Activated naive CD4-positive, alpha-beta T cell treated with anti-CD3 and anti-CD28 coated beads for 36 hours (primary cell): ENCODE measurements at regions of chr11 and their contacts with region 1.

Region 1: GRCh38 chr11:125141686-125142535 is 22.6 kb upstream of the PKNOX2 start:
- DNase-seq: peak; percentile 46
- H3K4me3 Mint-ChIP-seq: no peak overlapping the region
- H3K27ac Mint-ChIP-seq: no peak overlapping the region
- H3K4me1 Mint-ChIP-seq: peaks cover 3% of the 10 kb centered on the region
- H3K27me3 Mint-ChIP-seq: peaks cover 15% of the 10 kb centered on the region

Region 2: GRCh38 chr11:124961972-124962609 is 179.8 kb before region 1 on chr11:
- CTCF ChIA-PET with region 1: interaction called, 31 read pairs
- intact Hi-C with region 1: loop called (anchors 1 kb)
- DNase-seq: no peak
- H3K4me3 Mint-ChIP-seq: no peak overlapping the region
- H3K27ac Mint-ChIP-seq: no peak overlapping the region
- H3K4me1 Mint-ChIP-seq: no peaks in the 10 kb centered on the region
- H3K27me3 Mint-ChIP-seq: no peaks in the 10 kb centered on the region

Region 3: GRCh38 chr11:125091247-125091876 is 50.5 kb before region 1 on chr11:
- CTCF ChIA-PET with region 1: interaction called, 25 read pairs
- intact Hi-C with region 1: loop called (anchors 1 kb)
- DNase-seq: no peak
- H3K4me3 Mint-ChIP-seq: no peak overlapping the region
- H3K27ac Mint-ChIP-seq: no peak overlapping the region
- H3K4me1 Mint-ChIP-seq: no peaks in the 10 kb centered on the region
- H3K27me3 Mint-ChIP-seq: no peaks in the 10 kb centered on the region

Region 4: GRCh38 chr11:125123947-125124617 is 17.8 kb before region 1 on chr11:
- CTCF ChIA-PET with region 1: interaction called, 24 read pairs
- intact Hi-C with region 1: no loop called
- DNase-seq: peak; percentile 61
- H3K4me3 Mint-ChIP-seq: no peak overlapping the region
- H3K27ac Mint-ChIP-seq: no peak overlapping the region
- H3K4me1 Mint-ChIP-seq: no peaks in the 10 kb centered on the region
- H3K27me3 Mint-ChIP-seq: peaks cover 16% of the 10 kb centered on the region

Region 5: GRCh38 chr11:125154378-125155099 is 12.6 kb after region 1 on chr11:
- CTCF ChIA-PET with region 1: interaction called, 12 read pairs
- intact Hi-C with region 1: no loop called
- DNase-seq: no peak
- H3K4me3 Mint-ChIP-seq: no peak overlapping the region
- H3K27ac Mint-ChIP-seq: no peak overlapping the region
- H3K4me1 Mint-ChIP-seq: no peaks in the 10 kb centered on the region
- H3K27me3 Mint-ChIP-seq: peaks cover 22% of the 10 kb centered on the region